ENCODE measurements at regions of chr15 and their contacts with region 1.

Region 1: GRCh38 chr15:78872972-78873792 is 492 bp downstream of the MORF4L1 start:
- DNase-seq: peak; percentile 77
- ATAC-seq: peak; percentile 77
- H3K4me3 ChIP-seq: peak overlapping the region; percentile 85 to 98
- H3K27ac ChIP-seq: peak overlapping the region; percentile 98
- H3K4me1 ChIP-seq: peaks cover 19 to 36% of the 10 kb centered on the region in 2 experiments; a peak in 3 of 4 replicates
- H3K27me3 ChIP-seq: no peaks in the 10 kb centered on the region
- CTCF ChIP-seq: peak; percentile 20 to 46 (median 45); a peak in 4 of 6 replicates
- POLR2A ChIP-seq: no peak
- RAD21 ChIP-seq: no peak

Region 2: DNA sequence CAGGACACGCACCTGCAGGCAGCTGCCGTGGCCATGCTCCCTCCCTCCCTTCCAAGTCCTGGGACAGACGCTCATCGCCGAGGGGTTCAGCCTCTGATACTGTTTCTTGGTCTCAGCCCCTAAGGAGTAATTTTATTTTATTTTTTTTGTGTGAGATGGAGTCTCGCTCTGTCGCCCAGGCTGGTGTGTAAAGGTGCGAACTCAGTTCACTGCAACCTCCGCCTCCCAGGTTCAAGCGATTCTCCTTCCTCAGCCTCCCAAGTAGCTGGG is 115.6 kb before region 1 on chr15:
- CTCF ChIA-PET with region 1: interaction called, 3 read pairs
- POLR2A ChIA-PET with region 1: no interaction called
- RAD21 ChIA-PET with region 1: no interaction called
- intact Hi-C with region 1: loop called (anchors 5 kb)
- DNase-seq: no peak
- ATAC-seq: no peak
- H3K4me3 ChIP-seq: no peak overlapping the region
- H3K27ac ChIP-seq: no peak overlapping the region
- H3K4me1 ChIP-seq: no peaks in the 10 kb centered on the region
- H3K27me3 ChIP-seq: no peaks in the 10 kb centered on the region
- CTCF ChIP-seq: no peak
- POLR2A ChIP-seq: no peak
- RAD21 ChIP-seq: no peak